Activated CD4-positive, alpha-beta memory T cell treated with anti-CD3 and anti-CD28 coated beads, Interleukin-2, amount 10 ng/mL, durations not matched to agents 7 days and 5 days (primary cell): ENCODE measurements at regions of chr19 and their contacts with region 1.

Region 1: DNA sequence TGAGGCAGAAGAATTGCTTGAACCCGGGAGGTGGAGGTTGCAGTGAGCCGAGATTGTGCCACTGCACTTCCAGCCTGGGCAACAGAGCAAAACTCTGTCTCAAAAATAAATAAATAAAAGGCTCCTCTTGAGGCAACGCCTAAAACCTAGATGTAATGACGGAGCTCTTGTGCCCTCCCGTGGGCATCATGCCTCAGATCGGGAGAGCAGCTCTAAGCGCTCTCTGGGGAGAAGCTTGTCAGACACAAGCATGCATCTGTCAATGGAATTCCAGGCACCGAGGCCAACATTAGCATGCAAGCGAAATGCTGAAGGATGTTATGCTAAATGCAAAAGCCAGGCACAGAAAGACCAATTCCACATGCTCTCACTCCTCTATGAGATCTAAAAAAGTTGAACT is 45.6 kb upstream of the MRI1 start:
- DNase-seq: no peak
- H3K4me3 Mint-ChIP-seq: no peak overlapping the region
- H3K27ac Mint-ChIP-seq: no peak overlapping the region
- H3K4me1 Mint-ChIP-seq: no peaks in the 10 kb centered on the region
- H3K27me3 Mint-ChIP-seq: peaks cover 10% of the 10 kb centered on the region

Region 2: GRCh38 chr19:13637664-13638063 is 81.1 kb before region 1 on chr19:
- CTCF ChIA-PET with region 1: no interaction called
- POLR2A ChIA-PET with region 1: no interaction called
- DNase-seq: no peak
- H3K4me3 Mint-ChIP-seq: no peak overlapping the region
- H3K27ac Mint-ChIP-seq: no peak overlapping the region
- H3K4me1 Mint-ChIP-seq: no peaks in the 10 kb centered on the region
- H3K27me3 Mint-ChIP-seq: peaks cover 7% of the 10 kb centered on the region

Region 3: DNA sequence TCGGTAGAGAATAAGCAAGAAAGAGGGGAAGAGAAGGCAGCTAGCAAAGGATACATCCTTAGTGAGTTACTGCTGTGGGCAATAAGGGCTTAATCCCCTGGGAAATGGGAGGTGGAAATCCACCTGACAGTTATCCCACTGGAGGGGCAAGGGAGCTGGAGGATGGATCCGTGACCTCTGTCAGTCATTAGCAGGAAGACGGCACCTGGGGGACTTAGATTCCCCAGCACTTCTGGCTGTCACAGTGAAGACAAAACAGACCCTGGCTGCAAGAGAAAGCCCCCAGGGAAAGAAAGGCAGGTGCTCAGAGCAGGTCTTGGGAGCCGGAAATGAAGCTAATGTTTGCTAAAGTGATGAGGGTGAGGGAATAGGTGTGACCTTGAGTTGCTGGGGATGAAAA is 24.8 kb before region 1 on chr19:
- CTCF ChIA-PET with region 1: no interaction called
- POLR2A ChIA-PET with region 1: no interaction called
- DNase-seq: no peak
- H3K4me3 Mint-ChIP-seq: no peak overlapping the region
- H3K27ac Mint-ChIP-seq: no peak overlapping the region
- H3K4me1 Mint-ChIP-seq: no peaks in the 10 kb centered on the region
- H3K27me3 Mint-ChIP-seq: no peaks in the 10 kb centered on the region

Region 4: GRCh38 chr19:13731147-13731964 is 12.6 kb after region 1 on chr19:
- CTCF ChIA-PET with region 1: interaction called, 12 read pairs
- POLR2A ChIA-PET with region 1: no interaction called
- DNase-seq: peak; percentile 95
- H3K4me3 Mint-ChIP-seq: peak overlapping the region; percentile 80
- H3K27ac Mint-ChIP-seq: peak overlapping the region; percentile 92
- H3K4me1 Mint-ChIP-seq: peaks cover 24% of the 10 kb centered on the region
- H3K27me3 Mint-ChIP-seq: no peaks in the 10 kb centered on the region

Region 5: DNA sequence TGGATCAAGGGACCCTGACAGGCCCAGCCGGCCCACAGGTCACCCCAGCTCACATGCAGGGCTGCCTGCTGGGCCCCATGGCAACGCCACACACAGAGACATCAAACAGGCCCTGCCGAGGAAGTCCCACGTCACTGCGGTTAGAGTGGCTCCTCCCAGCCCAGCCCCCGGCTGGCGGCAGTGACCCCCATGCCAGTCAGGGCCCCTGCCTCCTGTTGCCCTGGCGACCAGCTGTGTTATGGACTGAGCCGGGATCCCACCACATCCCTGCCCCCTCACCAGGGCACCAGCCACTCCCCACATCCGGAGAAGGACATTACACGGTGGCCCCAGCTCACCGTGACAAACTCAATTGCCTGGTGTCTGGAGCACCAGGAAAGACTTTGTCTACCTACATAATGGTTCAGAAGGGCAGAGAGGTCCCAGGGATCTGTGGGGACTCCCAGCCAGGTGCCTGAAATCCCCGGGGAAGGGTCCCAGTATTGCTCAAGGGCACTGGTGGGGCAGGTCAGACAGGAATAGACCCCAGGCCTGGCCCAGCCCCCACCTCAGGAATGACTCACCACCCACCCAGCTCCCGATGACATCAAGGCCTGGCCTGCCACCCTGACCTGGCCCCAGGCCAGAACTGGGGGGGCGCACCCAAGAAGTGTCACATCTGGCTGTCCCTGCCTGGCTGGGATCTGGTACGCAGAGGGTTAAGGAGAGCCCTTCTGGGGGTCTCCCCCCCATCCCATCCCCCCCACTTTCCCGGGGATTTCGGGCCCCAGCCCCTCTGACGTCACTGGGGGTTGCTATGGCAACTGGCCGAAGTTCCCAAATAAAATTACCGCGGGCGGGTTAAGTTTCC is 128.0 kb after region 1 on chr19:
- CTCF ChIA-PET with region 1: no interaction called
- POLR2A ChIA-PET with region 1: no interaction called
- DNase-seq: peak; percentile 96
- H3K4me3 Mint-ChIP-seq: peak overlapping the region; percentile 80
- H3K27ac Mint-ChIP-seq: peak overlapping the region; percentile 99
- H3K4me1 Mint-ChIP-seq: peaks cover 59% of the 10 kb centered on the region
- H3K27me3 Mint-ChIP-seq: no peaks in the 10 kb centered on the region